A549 (cell line): ENCODE measurements at regions of chr4 and their contacts with region 1.

Region 1: GRCh38 chr4:140595065-140595464 is 26.3 kb upstream of the UCP1 start:
- DNase-seq: peak; percentile 25 to 41
- ATAC-seq: peak; percentile 95 to 97
- H3K4me3 ChIP-seq: no peak overlapping the region
- H3K27ac ChIP-seq: no peak overlapping the region
- H3K4me1 ChIP-seq: no peaks in the 10 kb centered on the region
- CTCF ChIP-seq: peak; percentile 51
- EP300 ChIP-seq: no peak
- POLR2A ChIP-seq: no peak
- RAD21 ChIP-seq: peak; percentile 61 to 64

Region 2: GRCh38 chr4:140609548-140610425 is 14.7 kb after region 1 on chr4:
- CTCF ChIA-PET with region 1: interaction called, 13 read pairs
- POLR2A ChIA-PET with region 1: no interaction called
- DNase-seq: peak; percentile 42 to 55
- ATAC-seq: peak; percentile 88 to 89; a peak in 5 of 6 replicates
- H3K4me3 ChIP-seq: no peak overlapping the region
- H3K27ac ChIP-seq: no peak overlapping the region
- H3K4me1 ChIP-seq: no peaks in the 10 kb centered on the region
- CTCF ChIP-seq: peak; percentile 60
- EP300 ChIP-seq: no peak
- POLR2A ChIP-seq: no peak
- RAD21 ChIP-seq: peak; percentile 65 to 74